ENCODE measurements at regions of chr5 and their contacts with region 1.

Region 1: DNA sequence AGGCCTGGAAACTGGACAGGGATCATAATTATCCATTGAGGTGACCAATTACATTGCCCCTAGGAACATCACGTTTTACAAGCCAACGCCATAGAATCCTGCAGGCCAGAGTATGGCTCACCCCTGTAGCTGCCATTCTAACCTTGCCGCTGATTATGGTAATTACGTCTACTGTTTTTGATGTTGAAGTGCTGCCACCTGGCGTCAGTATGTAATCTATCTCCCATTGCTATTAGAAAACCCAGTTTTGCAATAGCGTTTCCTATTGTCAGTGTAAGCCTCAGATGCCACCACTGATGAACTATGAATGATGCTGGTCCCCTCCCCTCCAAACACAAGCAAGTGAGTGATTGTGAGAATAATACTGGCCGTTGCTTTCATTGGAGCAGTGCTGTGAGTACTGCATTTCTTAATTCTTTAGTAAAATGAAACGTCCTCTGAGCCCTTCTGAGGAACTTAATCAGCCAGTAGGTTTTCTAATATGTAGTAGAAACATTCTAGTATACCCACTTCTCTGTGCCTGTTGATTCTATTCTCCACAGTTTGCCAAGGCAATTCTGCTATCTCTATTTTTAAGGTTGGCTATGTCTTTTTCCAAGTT is 100.5 kb upstream of the NMUR2 start:
- DNase-seq: peak; percentile 33
- ATAC-seq: peak; percentile 94
- H3K4me3 ChIP-seq: no peak overlapping the region
- H3K27ac ChIP-seq: no peak overlapping the region
- H3K4me1 ChIP-seq: no peaks in the 10 kb centered on the region
- H3K27me3 ChIP-seq: no peaks in the 10 kb centered on the region
- CTCF ChIP-seq: peak; percentile 40 to 70 (median 47); a peak in 5 of 6 replicates
- POLR2A ChIP-seq: no peak
- RAD21 ChIP-seq: peak; percentile 68

Region 2: DNA sequence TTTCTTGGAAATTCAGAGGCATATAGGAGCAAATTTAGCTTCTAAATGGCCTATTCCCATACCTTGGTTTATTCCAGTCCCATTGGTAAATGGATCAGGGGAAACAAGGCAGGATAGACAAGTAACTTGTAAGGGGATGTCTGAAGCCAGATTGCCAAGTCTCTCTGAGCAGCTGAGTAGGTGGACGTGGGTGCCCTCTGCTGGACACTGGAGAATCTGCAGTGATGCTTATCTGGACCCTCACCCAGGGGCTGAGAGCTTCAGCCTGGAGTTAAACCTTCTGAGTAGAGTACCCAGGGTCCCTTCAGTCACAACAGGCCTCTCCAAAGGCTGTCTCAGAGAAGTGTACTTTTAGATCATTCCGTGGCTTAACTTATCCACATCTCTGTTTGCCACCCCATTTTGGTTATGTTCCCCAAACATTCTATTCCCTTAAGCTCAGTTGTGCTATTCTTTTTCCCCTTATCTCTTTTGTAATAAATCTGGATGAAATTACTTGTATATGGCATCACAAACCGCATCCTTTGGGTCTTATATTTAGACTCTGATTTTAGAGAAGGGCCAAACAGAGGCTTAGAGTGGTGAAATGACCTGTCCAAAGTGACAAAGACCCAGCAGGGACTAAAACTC is 362.6 kb before region 1 on chr5:
- CTCF ChIA-PET with region 1: no interaction called
- POLR2A ChIA-PET with region 1: no interaction called
- RAD21 ChIA-PET with region 1: no interaction called
- intact Hi-C with region 1: loop called (anchors 10 kb)
- DNase-seq: peak; percentile 33
- ATAC-seq: peak; percentile 88
- H3K4me3 ChIP-seq: no peak overlapping the region
- H3K27ac ChIP-seq: no peak overlapping the region
- H3K4me1 ChIP-seq: no peaks in the 10 kb centered on the region
- H3K27me3 ChIP-seq: peaks cover 21% of the 10 kb centered on the region
- CTCF ChIP-seq: peak; percentile 34 to 87 (median 84); a peak in 5 of 6 replicates
- POLR2A ChIP-seq: no peak
- RAD21 ChIP-seq: peak; percentile 71

Region 3: DNA sequence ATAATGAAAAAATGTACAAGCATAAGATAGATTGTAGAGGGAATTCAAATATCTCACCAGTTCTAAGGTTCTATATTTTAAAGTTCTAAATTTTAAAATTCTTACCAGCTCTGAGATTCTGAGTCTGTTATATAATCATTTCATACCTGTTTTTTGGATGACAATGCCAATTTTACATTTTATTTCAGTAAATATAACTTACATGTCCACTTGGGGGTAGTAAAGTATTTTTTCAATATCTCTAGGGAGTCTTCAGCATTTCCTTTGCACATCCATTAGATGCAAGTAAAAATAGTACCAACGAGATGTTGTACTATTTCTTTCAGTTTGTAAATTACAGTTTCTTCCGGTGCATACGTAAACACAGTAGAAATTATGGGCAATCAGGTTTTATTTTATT is 126.2 kb before region 1 on chr5:
- CTCF ChIA-PET with region 1: no interaction called
- POLR2A ChIA-PET with region 1: no interaction called
- RAD21 ChIA-PET with region 1: no interaction called
- intact Hi-C with region 1: loop called (anchors 10 kb)
- DNase-seq: no peak
- ATAC-seq: no peak
- H3K4me3 ChIP-seq: no peak overlapping the region
- H3K27ac ChIP-seq: no peak overlapping the region
- H3K4me1 ChIP-seq: no peaks in the 10 kb centered on the region
- H3K27me3 ChIP-seq: peaks cover 7% of the 10 kb centered on the region; the same call in 1 of the 2 replicates
- CTCF ChIP-seq: peak in 1 of 3 experiments; percentile 16; a peak in 1 of 6 replicates
- POLR2A ChIP-seq: no peak
- RAD21 ChIP-seq: no peak

Region 4: DNA sequence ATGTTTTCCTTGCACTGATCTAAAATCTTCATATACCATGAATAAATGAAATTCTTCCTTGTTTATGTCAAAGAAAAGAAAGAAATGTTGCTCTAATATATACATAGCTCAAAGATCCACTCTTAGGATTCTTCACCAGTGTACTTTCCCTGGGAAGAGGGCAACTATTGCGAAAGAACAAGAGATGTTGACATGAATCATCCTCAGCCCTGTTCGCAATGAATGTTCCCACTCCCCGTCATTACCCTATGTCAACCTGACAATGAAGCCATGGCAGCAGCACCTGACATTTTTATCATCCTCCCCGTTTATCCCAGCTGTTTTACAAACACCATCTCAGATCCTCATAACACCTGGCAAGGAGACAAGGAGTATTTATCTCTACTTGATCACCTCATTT is 575.8 kb after region 1 on chr5:
- CTCF ChIA-PET with region 1: no interaction called
- POLR2A ChIA-PET with region 1: no interaction called
- RAD21 ChIA-PET with region 1: no interaction called
- intact Hi-C with region 1: no loop called
- DNase-seq: no peak
- ATAC-seq: no peak
- H3K4me3 ChIP-seq: no peak overlapping the region
- H3K27ac ChIP-seq: no peak overlapping the region
- H3K4me1 ChIP-seq: no peaks in the 10 kb centered on the region
- H3K27me3 ChIP-seq: no peaks in the 10 kb centered on the region
- CTCF ChIP-seq: no peak
- POLR2A ChIP-seq: no peak
- RAD21 ChIP-seq: no peak

Measured in HCT116 (cell line).